Posterior vena cava (tissue), 2 donors: ENCODE measurements at regions of chr3 and their contacts with region 1.

Region 1: DNA sequence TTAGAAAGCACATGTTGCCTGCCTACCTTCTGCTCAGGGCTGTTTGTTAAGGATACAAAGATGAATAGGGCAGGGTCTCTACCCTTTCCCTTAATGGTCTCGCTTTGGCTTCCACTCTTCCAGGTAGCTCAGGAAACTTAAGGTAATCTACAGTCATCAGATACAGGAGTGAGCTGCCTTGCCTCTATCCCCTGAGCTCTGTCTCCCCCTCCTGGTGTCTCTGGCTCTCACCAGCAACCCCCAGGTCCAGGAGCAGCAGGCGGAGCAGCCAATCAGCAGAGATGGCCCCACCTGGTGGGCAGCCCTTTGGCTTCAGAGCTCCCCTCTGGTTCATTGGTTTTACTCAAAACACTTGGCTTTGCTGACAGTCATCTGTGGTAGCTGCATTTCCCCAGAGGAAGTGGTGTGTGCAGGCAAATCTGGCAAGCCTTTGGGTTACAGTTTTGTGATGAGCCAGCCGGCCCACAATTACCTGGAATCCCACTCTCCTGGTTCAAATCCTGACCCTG is 8.5 kb upstream of the CX3CR1 start:
- DNase-seq: peak; percentile 86

Region 2: GRCh38 chr3:39126532-39127071 is 161.8 kb before region 1 on chr3:
- intact Hi-C with region 1: loop called (anchors 5 to 10 kb)
- DNase-seq: peak; percentile 79

Region 3: DNA sequence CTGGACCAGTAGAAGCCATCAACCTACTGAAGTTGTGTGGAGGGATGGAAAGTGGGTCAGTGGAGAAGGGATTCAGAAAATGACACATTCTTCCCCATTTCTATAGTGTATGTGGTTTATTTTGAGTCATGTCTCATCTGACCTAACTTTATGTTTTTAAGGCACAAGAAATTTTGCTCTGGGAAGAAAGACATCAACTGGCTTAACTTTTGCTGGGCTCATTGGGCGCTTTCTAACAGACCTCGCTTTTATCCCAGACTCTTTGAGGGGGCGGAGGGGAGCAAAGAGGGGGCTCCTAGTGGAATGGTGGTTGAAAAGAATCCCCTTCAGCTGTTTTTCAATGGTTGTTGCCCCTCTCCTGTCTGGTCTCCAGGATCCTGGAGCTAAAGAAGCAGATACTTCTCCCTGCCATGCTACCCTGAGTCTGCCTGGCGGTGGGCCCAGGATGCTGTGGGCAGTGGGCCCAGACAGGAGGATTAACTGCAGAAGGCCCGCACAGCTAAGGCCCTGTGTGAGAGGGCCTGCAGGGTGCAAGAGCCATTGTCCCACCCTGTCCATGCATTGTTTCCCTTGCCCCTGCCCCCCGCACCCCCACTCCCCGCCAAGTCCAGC is 149.4 kb before region 1 on chr3:
- intact Hi-C with region 1: loop called in 1 of 2 experiments (anchors 10 kb)
- DNase-seq: no peak

Region 4: GRCh38 chr3:39189959-39190269 is 98.4 kb before region 1 on chr3:
- intact Hi-C with region 1: loop called in 1 of 2 experiments (anchors 5 kb)
- DNase-seq: no peak

Region 5: GRCh38 chr3:39208463-39209055 is 79.8 kb before region 1 on chr3:
- intact Hi-C with region 1: loop called (anchors 5 kb)
- DNase-seq: no peak

Region 6: DNA sequence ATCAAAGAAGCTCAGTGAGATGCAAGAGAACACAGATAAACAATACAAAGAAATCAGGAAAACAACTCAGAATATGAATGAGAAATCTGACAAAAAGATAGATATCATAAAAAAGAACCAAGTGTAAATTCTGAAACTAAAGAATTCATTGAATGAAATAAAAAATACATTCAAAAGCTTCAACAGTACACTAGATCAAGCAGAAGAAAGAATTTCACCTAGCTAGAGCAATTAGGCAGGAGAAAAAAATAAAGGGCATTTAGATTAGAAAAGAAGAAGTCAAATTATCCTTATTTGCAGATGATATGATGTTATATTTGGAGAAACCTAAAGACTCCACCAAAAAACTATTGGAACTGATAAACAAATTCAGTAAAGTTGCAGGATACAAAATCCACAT is 10.9 kb after region 1 on chr3:
- intact Hi-C with region 1: no loop called
- DNase-seq: no peak

Region 7: GRCh38 chr3:39362850-39363249 is 74.5 kb after region 1 on chr3:
- intact Hi-C with region 1: no loop called
- DNase-seq: no peak